Activated naive CD4-positive, alpha-beta T cell treated with anti-CD3 and anti-CD28 coated beads for 36 hours (primary cell): ENCODE measurements at regions of chr3 and their contacts with region 1.

Region 1: GRCh38 chr3:186882881-186883685 is 40.6 kb downstream of the ADIPOQ start:
- DNase-seq: peak; percentile 74
- H3K4me3 Mint-ChIP-seq: peak overlapping the region; percentile 14
- H3K27ac Mint-ChIP-seq: peak overlapping the region; percentile 72
- H3K4me1 Mint-ChIP-seq: peaks cover 56% of the 10 kb centered on the region
- H3K27me3 Mint-ChIP-seq: no peaks in the 10 kb centered on the region

Region 2: DNA sequence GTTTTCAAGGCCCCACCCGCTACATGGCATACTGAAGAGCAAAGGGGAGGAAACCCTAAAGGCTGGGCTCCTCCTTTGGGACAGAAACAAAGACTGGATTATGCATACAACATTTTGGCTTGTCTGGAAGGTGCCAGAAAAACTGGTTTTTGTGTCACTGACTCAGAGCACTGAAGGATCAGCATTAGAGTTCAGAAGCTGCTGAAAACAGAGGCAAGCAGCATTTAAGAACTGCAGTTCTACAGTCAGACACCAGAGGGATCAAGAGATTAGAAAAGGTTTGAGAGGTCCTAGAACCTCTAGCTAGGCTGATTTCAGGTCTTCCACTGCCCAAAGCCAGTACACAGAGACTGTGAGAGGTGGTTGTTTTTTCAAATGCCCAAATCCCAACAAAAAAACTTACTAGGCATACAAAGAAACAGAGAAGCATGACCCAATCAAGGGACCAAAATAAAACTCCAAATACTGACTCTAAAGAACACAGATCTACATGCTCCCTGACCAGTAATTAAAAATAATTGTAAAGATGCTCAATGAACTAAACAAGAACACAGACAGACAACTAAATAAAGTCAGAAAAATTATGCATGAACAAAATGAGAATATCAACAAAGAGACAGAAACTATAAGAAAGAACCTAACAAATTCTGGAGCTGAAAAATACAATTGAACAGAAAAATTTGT is 1205.8 kb before region 1 on chr3:
- CTCF ChIA-PET with region 1: no interaction called
- intact Hi-C with region 1: no loop called
- DNase-seq: no peak
- H3K4me3 Mint-ChIP-seq: no peak overlapping the region
- H3K27ac Mint-ChIP-seq: no peak overlapping the region
- H3K4me1 Mint-ChIP-seq: no peaks in the 10 kb centered on the region
- H3K27me3 Mint-ChIP-seq: peaks cover 14% of the 10 kb centered on the region

Region 3: GRCh38 chr3:186754006-186754405 is 129.1 kb before region 1 on chr3:
- CTCF ChIA-PET with region 1: no interaction called
- intact Hi-C with region 1: loop called (anchors 1 kb)
- DNase-seq: no peak
- H3K4me3 Mint-ChIP-seq: no peak overlapping the region
- H3K27ac Mint-ChIP-seq: no peak overlapping the region
- H3K4me1 Mint-ChIP-seq: peaks cover 12% of the 10 kb centered on the region
- H3K27me3 Mint-ChIP-seq: no peaks in the 10 kb centered on the region

Region 4: DNA sequence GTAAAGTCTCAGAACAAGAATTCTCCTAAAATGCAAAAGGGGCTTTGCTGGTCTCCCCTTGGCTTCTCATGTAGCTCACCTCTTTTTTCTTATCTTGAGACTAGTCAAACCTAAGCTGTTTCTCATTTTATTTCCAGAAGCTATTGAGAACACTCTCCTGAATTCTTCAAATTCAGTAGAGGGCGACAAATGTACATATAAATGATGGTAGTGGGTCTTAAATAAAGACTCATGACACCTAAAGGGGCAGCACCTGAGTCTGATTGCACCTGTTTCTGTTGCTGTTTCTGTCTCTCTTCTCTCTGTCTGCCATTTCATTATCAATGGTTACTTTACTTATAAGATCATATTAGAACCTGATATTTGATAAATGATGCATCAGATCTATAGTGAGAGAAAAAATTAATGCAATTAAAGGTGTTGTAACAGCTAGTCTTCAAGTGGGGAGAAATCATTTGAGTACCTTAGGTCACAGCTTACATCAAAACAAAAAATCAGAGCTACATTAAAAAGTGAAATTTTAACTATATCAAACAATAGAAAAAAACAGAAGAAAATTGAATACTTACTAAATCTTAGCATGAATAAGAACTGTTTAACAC is 33.6 kb before region 1 on chr3:
- CTCF ChIA-PET with region 1: interaction called, 4 read pairs
- intact Hi-C with region 1: loop called (anchors 1 kb)
- DNase-seq: peak; percentile 45
- H3K4me3 Mint-ChIP-seq: no peak overlapping the region
- H3K27ac Mint-ChIP-seq: no peak overlapping the region
- H3K4me1 Mint-ChIP-seq: peaks cover 12% of the 10 kb centered on the region
- H3K27me3 Mint-ChIP-seq: peaks cover 3% of the 10 kb centered on the region

Region 5: GRCh38 chr3:186953011-186953487 is 70.0 kb after region 1 on chr3:
- CTCF ChIA-PET with region 1: no interaction called
- intact Hi-C with region 1: loop called (anchors 1 kb)
- DNase-seq: peak; percentile 27
- H3K4me3 Mint-ChIP-seq: peak overlapping the region; percentile 4
- H3K27ac Mint-ChIP-seq: peak overlapping the region; percentile 60
- H3K4me1 Mint-ChIP-seq: peaks cover 67% of the 10 kb centered on the region
- H3K27me3 Mint-ChIP-seq: no peaks in the 10 kb centered on the region

Region 6: DNA sequence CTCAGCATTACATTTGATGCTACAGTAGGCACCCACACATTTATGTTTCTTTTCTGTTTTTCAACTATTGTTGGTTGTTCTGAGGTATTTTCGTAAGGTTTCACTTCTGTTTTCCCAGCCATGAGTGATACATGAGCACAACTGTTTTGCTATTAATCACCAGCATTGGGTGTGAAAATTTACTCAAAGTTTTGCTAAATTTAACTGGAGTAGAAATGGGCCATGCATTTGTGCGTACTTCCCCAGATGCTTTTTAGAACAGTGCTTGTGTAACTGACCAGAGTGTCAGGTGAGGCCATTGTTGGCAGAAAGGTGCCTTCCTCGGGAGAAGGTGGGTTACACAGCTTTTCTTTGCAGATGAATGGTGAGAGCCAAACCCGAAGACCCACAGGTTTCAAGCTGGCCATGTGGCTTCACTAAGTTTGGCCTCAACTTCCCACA is 117.6 kb after region 1 on chr3:
- CTCF ChIA-PET with region 1: interaction called, 3 read pairs
- intact Hi-C with region 1: loop called (anchors 1 kb)
- DNase-seq: peak; percentile 76
- H3K4me3 Mint-ChIP-seq: peak overlapping the region; percentile 25
- H3K27ac Mint-ChIP-seq: peak overlapping the region; percentile 90
- H3K4me1 Mint-ChIP-seq: peaks cover 76% of the 10 kb centered on the region
- H3K27me3 Mint-ChIP-seq: no peaks in the 10 kb centered on the region

Region 7: DNA sequence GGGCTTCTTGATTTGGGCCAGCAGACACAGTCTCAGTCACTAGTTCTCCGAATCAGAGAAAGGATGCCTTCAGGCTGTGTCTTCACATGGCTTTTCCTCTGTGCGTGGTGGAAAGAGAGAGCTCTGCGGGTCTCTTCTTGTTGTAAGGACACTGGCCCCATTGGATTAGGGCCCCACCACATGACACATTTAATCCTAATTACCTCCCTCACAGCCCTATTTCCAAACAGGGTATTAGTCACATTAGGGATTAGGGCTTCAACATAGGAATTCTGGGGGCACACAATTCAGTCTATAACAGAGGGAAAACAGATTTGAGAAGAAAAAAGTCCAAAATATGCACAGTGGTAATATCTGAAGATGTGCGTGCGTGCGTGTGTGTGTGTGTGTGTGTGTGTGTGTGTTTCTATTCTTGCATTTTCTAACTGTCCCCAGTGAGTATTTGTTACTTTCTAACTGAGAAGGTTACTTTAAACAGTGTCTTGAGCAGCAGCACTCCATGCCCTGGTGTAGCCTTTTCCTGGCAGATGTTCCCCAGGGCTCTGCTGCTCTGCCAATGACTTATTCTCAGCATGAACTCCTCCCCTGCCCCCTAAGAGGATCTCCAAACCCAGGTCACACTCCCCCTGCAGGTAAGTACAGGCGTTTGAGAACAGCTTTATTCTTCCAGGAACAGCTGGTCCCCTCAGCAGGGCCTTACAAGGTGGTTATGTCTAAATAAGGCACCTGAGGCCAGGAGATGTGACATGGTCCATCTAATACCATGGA is 183.3 kb after region 1 on chr3:
- CTCF ChIA-PET with region 1: no interaction called
- intact Hi-C with region 1: loop called (anchors 1 kb)
- DNase-seq: peak; percentile 66
- H3K4me3 Mint-ChIP-seq: no peak overlapping the region
- H3K27ac Mint-ChIP-seq: peak overlapping the region; percentile 79
- H3K4me1 Mint-ChIP-seq: peaks cover 66% of the 10 kb centered on the region
- H3K27me3 Mint-ChIP-seq: no peaks in the 10 kb centered on the region